ENCODE measurements at regions of chr11 and their contacts with region 1.

Region 1: GRCh38 chr11:10450464-10451425 is 4.3 kb upstream of the AMPD3 start:
- DNase-seq: peak; percentile 30 to 72 (median 49)
- H3K4me3 ChIP-seq: peak overlapping the region; percentile 52
- H3K4me3 Mint-ChIP-seq: peak overlapping the region; percentile 83 to 94 (median 89)
- H3K27ac ChIP-seq: no peak overlapping the region
- H3K27ac Mint-ChIP-seq: peak overlapping the region; percentile 91 to 99 (median 96)
- H3K4me1 ChIP-seq: peaks cover 40% of the 10 kb centered on the region
- H3K4me1 Mint-ChIP-seq: peaks cover 45 to 66% (median 63%) of the 10 kb centered on the region in 3 donors
- H3K27me3 ChIP-seq: no peaks in the 10 kb centered on the region
- H3K27me3 Mint-ChIP-seq: peaks cover 2 to 6% of the 10 kb centered on the region in 2 donors

Region 2: GRCh38 chr11:10272132-10272531 is 178.6 kb before region 1 on chr11:
- CTCF ChIA-PET with region 1: no interaction called
- POLR2A ChIA-PET with region 1: no interaction called
- DNase-seq: no peak
- H3K4me3 ChIP-seq: no peak overlapping the region
- H3K4me3 Mint-ChIP-seq: no peak overlapping the region
- H3K27ac ChIP-seq: no peak overlapping the region
- H3K27ac Mint-ChIP-seq: no peak overlapping the region
- H3K4me1 ChIP-seq: no peaks in the 10 kb centered on the region
- H3K4me1 Mint-ChIP-seq: peaks cover 0 to 9% (median 5%) of the 10 kb centered on the region in 3 donors
- H3K27me3 ChIP-seq: no peaks in the 10 kb centered on the region
- H3K27me3 Mint-ChIP-seq: no peaks in the 10 kb centered on the region

Region 3: DNA sequence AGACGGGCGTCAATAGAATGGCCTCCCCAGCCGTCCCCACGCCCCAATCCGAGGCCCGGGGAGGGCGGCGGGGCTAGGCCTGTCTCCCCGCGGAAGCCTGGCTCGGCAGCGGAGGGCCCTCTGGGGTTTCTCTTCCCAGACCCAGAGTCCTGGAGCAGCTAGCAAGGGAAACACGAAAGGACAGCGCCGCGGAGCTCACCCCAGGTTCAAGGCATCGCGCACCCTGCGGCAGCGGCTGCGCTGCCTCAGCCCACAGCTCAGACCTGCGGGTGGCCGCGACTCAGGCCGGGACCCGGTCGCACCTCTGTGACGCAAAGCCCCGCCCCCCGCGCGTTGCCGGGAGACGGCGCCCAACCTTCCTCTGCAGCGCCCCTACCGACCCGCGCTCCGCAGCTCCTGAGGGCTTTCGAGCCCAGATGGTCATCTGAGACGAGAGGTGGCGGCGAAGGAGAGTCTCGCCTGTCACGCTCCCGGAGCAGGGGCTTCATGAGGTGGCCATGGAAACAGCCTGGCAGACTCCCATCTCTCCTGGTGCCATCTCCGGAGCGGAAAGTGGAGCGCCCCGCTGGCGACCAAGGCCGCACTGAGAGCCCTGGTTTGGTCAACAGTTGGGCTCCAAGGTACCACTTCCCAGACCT is 90.3 kb after region 1 on chr11 and contains the start of gene RNF141:
- CTCF ChIA-PET with region 1: interaction called, 19 read pairs
- POLR2A ChIA-PET with region 1: interaction called, 3 read pairs
- DNase-seq: peak; percentile 91 to 94 (median 93)
- H3K4me3 ChIP-seq: peak within 1 kb of the TSS; percentile 76
- H3K4me3 Mint-ChIP-seq: peak within 1 kb of the TSS; percentile 87 to 96 (median 90)
- H3K27ac ChIP-seq: peak within 1 kb of the TSS; percentile 80
- H3K27ac Mint-ChIP-seq: peak within 1 kb of the TSS; percentile 83 to 96 (median 93)
- H3K4me1 ChIP-seq: peaks cover 15% of the 10 kb centered on the region
- H3K4me1 Mint-ChIP-seq: peaks cover 17 to 33% (median 22%) of the 10 kb centered on the region in 3 donors
- H3K27me3 ChIP-seq: no peaks in the 10 kb centered on the region
- H3K27me3 Mint-ChIP-seq: peaks cover 2 to 3% of the 10 kb centered on the region in 2 donors
- total RNA-seq, gene RNF141: 19.6 to 20.0 TPM

Measured in CD8-positive, alpha-beta memory T cell (primary cell).